HCT116 (cell line): ENCODE measurements at regions of chr15 and their contacts with region 1.

Region 1: DNA sequence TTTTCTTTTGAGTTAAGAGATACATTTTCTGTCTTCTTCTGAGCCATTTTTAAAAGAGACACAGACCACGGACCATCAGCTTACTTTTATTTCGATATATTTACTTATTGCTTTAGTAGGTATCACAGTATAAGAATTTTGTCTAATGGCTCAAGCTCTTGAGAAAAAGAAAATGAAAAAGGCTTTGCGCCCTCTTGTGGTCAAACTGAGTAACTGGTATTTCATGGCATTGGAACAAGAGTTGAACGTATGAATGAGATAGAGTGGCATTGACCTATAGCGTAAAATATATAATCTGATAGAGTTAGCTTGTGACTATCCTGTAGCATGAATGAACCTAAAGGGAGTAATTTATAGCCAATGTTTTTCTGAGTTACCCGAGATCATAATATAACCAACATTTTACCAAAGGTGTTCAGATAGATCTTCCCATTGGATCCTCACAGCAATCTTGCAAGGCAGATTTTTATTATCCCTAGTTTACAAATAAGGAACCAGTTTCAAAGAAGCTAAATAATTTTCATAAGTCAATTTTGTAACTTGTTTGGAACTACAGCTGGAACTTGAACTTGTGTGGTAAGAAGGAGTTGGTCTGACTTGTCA is 154.6 kb downstream of the POLR2M start:
- DNase-seq: peak; percentile 60
- ATAC-seq: peak; percentile 82
- H3K4me3 ChIP-seq: no peak overlapping the region
- H3K27ac ChIP-seq: no peak overlapping the region
- H3K4me1 ChIP-seq: no peaks in the 10 kb centered on the region
- H3K27me3 ChIP-seq: no peaks in the 10 kb centered on the region
- CTCF ChIP-seq: peak; percentile 62 to 86 (median 65); a peak in 5 of 6 replicates
- POLR2A ChIP-seq: no peak
- RAD21 ChIP-seq: peak; percentile 73

Region 2: DNA sequence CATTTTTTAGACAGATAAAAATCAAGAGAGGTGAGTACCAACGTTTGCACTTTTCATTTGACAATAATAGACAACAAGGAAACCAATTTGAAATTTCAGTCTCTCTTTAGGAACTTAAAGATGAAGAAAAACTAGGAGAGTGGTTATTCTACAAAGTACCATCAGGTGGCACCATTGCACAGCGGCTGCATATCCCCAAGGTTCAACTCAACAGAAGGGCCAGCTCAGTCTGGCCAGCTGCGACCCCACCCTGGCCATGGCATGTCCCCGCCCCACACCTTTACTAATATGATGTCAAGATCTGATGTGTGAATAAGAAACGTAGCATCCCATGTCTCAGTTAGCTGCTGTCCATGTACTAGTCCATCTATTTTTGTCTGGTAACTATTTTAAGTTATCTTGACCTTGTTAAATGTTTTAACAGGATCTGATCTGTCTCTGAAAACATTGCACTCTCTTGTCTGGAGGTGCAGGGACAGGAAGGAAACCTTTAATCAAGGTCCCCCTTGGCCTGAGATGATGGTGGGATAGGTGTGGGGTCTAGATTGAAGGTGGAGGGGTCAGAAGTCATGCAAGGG is 520.4 kb before region 1 on chr15:
- CTCF ChIA-PET with region 1: no interaction called
- POLR2A ChIA-PET with region 1: no interaction called
- RAD21 ChIA-PET with region 1: no interaction called
- intact Hi-C with region 1: loop called (anchors 5 kb)
- DNase-seq: peak; percentile 56
- ATAC-seq: peak; percentile 91
- H3K4me3 ChIP-seq: no peak overlapping the region
- H3K27ac ChIP-seq: no peak overlapping the region
- H3K4me1 ChIP-seq: no peaks in the 10 kb centered on the region
- H3K27me3 ChIP-seq: no peaks in the 10 kb centered on the region
- CTCF ChIP-seq: peak; percentile 75 to 92 (median 90)
- POLR2A ChIP-seq: no peak
- RAD21 ChIP-seq: peak; percentile 94

Region 3: GRCh38 chr15:57586661-57587424 is 274.3 kb before region 1 on chr15:
- CTCF ChIA-PET with region 1: no interaction called
- POLR2A ChIA-PET with region 1: no interaction called
- RAD21 ChIA-PET with region 1: no interaction called
- intact Hi-C with region 1: no loop called
- DNase-seq: no peak
- ATAC-seq: no peak
- H3K4me3 ChIP-seq: no peak overlapping the region
- H3K27ac ChIP-seq: no peak overlapping the region
- H3K4me1 ChIP-seq: peaks cover 9 to 11% of the 10 kb centered on the region in 2 experiments; a peak in 3 of 4 replicates
- H3K27me3 ChIP-seq: no peaks in the 10 kb centered on the region
- CTCF ChIP-seq: no peak
- POLR2A ChIP-seq: no peak
- RAD21 ChIP-seq: no peak

Region 4: GRCh38 chr15:57667171-57667849 is 193.8 kb before region 1 on chr15:
- CTCF ChIA-PET with region 1: no interaction called
- POLR2A ChIA-PET with region 1: no interaction called
- RAD21 ChIA-PET with region 1: no interaction called
- intact Hi-C with region 1: loop called (anchors 2 kb)
- DNase-seq: no peak
- ATAC-seq: peak; percentile 87
- H3K4me3 ChIP-seq: no peak overlapping the region
- H3K27ac ChIP-seq: no peak overlapping the region
- H3K4me1 ChIP-seq: peaks cover 5 to 6% of the 10 kb centered on the region in 2 experiments; a peak in 2 of 4 replicates
- H3K27me3 ChIP-seq: no peaks in the 10 kb centered on the region
- CTCF ChIP-seq: peak; percentile 32 to 57 (median 34); a peak in 4 of 6 replicates
- POLR2A ChIP-seq: no peak
- RAD21 ChIP-seq: peak; percentile 61

Region 5: GRCh38 chr15:57732526-57733331 is 128.4 kb before region 1 on chr15:
- CTCF ChIA-PET with region 1: interaction called, 20 read pairs
- POLR2A ChIA-PET with region 1: no interaction called
- RAD21 ChIA-PET with region 1: no interaction called
- intact Hi-C with region 1: no loop called
- DNase-seq: peak; percentile 48
- ATAC-seq: peak; percentile 91
- H3K4me3 ChIP-seq: no peak overlapping the region
- H3K27ac ChIP-seq: no peak overlapping the region
- H3K4me1 ChIP-seq: peaks cover 4% of the 10 kb centered on the region in 2 experiments; a peak in 3 of 4 replicates
- H3K27me3 ChIP-seq: no peaks in the 10 kb centered on the region
- CTCF ChIP-seq: peak; percentile 47 to 97 (median 89); a peak in 5 of 6 replicates
- POLR2A ChIP-seq: no peak
- RAD21 ChIP-seq: peak; percentile 46; the same call in 1 of the 2 replicates

Region 6: GRCh38 chr15:57751177-57751800 is 109.8 kb before region 1 on chr15:
- CTCF ChIA-PET with region 1: interaction called, 133 read pairs
- POLR2A ChIA-PET with region 1: no interaction called
- RAD21 ChIA-PET with region 1: interaction called in 1 of 2 experiments, 7 read pairs
- intact Hi-C with region 1: loop called (anchors 1 kb)
- DNase-seq: no peak
- ATAC-seq: peak; percentile 63
- H3K4me3 ChIP-seq: no peak overlapping the region
- H3K27ac ChIP-seq: no peak overlapping the region
- H3K4me1 ChIP-seq: no peaks in the 10 kb centered on the region
- H3K27me3 ChIP-seq: no peaks in the 10 kb centered on the region
- CTCF ChIP-seq: peak; percentile 51 to 62 (median 60); a peak in 5 of 6 replicates
- POLR2A ChIP-seq: no peak
- RAD21 ChIP-seq: peak; percentile 71

Region 7: DNA sequence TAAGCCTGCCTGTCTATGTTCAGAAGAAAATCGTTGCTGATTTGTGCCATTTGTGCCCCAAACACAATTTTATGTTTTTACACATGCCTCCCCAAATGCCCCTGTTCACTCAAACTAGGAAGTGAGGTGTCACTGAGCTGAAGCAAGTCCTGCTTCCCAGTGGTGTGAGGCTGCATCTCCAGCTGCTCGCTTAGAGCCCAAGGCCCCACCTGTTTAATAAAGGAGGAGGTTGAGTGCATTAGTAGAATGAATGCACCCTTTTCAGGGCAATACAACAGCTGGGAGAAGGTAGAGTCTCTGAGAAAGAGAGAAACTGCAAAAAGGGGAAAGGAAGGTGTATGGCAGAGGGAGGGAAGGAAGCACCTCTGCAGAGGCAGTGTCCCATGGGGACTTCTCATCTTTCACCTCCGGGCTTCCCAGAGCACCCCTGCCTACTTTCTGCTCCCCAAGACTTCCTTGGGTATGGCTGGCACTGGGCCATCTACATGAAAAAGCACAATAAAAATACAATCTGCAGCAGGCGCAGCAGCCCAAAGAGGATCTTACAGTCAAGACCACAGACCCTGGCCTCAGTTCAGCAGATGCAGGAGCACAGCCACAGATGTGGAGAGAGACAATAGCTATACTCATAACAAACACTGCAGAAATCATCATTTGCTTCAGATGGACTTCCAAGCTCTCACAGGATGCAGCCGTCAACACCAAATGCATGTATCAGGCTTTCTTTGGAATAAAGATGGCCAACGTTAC is 11.3 kb after region 1 on chr15:
- CTCF ChIA-PET with region 1: interaction called, 17 read pairs
- POLR2A ChIA-PET with region 1: no interaction called
- RAD21 ChIA-PET with region 1: no interaction called
- intact Hi-C with region 1: no loop called
- DNase-seq: no peak
- ATAC-seq: no peak
- H3K4me3 ChIP-seq: no peak overlapping the region
- H3K27ac ChIP-seq: no peak overlapping the region
- H3K4me1 ChIP-seq: peaks cover 0 to 14% of the 10 kb centered on the region in 2 experiments; a peak in 2 of 4 replicates
- H3K27me3 ChIP-seq: no peaks in the 10 kb centered on the region
- CTCF ChIP-seq: no peak
- POLR2A ChIP-seq: no peak
- RAD21 ChIP-seq: no peak